SK-N-SH (cell line): ENCODE measurements at regions of chr11 and their contacts with region 1.

Region 1: GRCh38 chr11:115393950-115394349 is 110.3 kb downstream of the CADM1 start:
- DNase-seq: no peak
- H3K4me3 ChIP-seq: no peak overlapping the region
- H3K27ac ChIP-seq: peak overlapping the region in 1 of 2 experiments; percentile 43; a peak in 2 of 4 replicates
- H3K4me1 ChIP-seq: peaks cover 0 to 19% of the 10 kb centered on the region in 2 experiments; a peak in 2 of 4 replicates
- H3K27me3 ChIP-seq: no peaks in the 10 kb centered on the region
- CTCF ChIP-seq: no peak
- EP300 ChIP-seq: peak in 1 of 2 experiments; percentile 31; a peak in 1 of 4 replicates
- RAD21 ChIP-seq: no peak

Region 2: GRCh38 chr11:115408378-115408921 is 14.5 kb after region 1 on chr11:
- CTCF ChIA-PET with region 1: interaction called, 10 read pairs
- POLR2A ChIA-PET with region 1: no interaction called
- DNase-seq: no peak
- H3K4me3 ChIP-seq: no peak overlapping the region
- H3K27ac ChIP-seq: no peak overlapping the region
- H3K4me1 ChIP-seq: peaks cover 0 to 29% of the 10 kb centered on the region in 2 experiments; a peak in 2 of 4 replicates
- H3K27me3 ChIP-seq: no peaks in the 10 kb centered on the region
- CTCF ChIP-seq: no peak
- EP300 ChIP-seq: no peak
- RAD21 ChIP-seq: no peak

Region 3: DNA sequence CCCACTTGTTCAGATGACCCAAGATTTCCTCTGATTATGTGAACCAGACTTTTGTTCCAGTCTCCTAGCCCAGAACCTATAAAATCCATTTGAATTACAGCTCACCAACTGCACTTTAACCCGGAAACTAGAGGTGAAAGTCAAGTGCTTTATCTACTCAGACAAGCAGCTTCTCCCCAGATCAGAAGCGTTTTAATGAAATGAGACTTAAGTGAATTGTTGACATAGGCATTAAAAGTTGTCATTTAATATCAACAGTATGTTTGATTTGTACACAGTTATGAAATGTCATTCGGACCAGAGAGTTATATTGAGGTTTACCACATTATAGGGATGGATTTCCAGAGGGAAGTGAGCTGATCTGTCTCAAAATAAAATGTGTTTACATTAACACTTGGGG is 58.3 kb after region 1 on chr11:
- CTCF ChIA-PET with region 1: no interaction called
- POLR2A ChIA-PET with region 1: no interaction called
- DNase-seq: no peak
- H3K4me3 ChIP-seq: no peak overlapping the region
- H3K27ac ChIP-seq: no peak overlapping the region
- H3K4me1 ChIP-seq: no peaks in the 10 kb centered on the region; a peak in 1 of 4 replicates
- H3K27me3 ChIP-seq: no peaks in the 10 kb centered on the region
- CTCF ChIP-seq: no peak
- EP300 ChIP-seq: no peak
- RAD21 ChIP-seq: no peak